ENCODE measurements at regions of chr15 and their contacts with region 1.

Region 1: GRCh38 chr15:65690778-65691177 is 69.0 kb downstream of the SLC24A1 start:
- DNase-seq: no peak

Region 2: DNA sequence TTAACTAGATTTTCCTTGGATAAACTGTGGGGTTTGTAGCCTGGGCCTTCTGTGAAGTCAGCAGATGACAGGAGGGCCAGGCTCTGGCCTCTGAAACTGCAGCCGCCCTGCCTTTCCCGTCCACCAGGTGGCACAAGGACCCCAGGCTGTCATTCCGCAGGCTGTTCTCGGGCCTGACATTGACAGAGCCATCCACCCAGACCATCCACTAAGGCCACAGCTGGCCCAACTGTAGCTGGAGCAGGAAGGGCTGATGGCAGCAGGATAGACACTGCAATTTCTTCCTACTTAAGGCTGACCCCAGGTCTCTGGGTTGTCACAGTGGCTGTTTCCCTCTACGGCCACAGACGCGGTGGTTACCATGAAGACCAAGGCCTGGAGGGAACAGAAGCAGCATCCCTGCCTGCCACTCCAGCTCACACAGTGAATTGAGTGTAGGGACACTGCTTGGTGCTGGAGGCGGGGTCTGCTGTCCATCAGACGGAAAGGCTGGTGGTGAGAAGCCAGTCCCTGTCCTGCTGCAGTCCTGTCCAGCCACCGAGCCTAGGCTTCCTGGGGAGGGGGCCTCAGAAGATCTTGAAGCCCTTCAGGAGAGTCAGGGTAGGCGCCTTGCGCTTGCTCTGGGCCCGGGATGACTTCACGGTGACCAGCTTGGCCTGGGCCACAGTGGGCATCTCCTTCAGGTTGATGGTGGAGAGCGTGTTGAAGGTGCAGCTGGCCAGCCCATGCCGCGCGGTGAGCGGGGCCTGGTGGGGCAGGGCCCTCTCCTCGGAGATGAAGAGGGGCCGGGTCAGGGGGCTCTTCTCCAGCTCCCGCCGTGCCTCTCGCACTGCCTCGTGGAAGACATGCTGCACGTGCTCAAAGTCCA is 636.2 kb before region 1 on chr15:
- intact Hi-C with region 1: no loop called
- DNase-seq: peak; percentile 91

Region 3: DNA sequence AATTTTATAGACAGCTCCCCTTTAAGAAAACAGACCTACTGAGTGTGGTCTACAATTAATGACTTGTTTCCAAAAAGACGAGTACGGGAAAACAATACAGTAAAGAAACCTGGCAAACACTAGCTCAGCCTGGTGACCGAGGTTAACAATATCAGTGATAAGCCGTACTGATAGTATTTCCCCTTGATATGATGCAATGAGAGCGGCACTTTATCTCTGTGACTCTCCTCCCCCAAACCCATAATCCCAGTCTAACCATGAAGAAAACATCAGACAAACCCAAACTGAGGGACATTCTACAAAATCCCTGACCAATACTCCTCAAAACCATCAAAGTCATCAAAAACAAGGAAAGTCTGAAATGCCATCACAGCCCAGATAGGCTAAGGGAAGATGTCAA is 93.1 kb after region 1 on chr15:
- intact Hi-C with region 1: no loop called
- DNase-seq: no peak

Region 4: GRCh38 chr15:66323312-66323928 is 632.6 kb after region 1 on chr15:
- intact Hi-C with region 1: loop called in 1 of 2 experiments (anchors 10 kb)
- DNase-seq: no peak